ENCODE measurements at regions of chr12 and their contacts with region 1.

Region 1: GRCh38 chr12:52903285-52903854 is 1.5 kb downstream of the KRT8 start:
- DNase-seq: peak; percentile 90
- ATAC-seq: peak; percentile 56
- H3K4me3 Mint-ChIP-seq: peak overlapping the region; percentile 92
- H3K27ac Mint-ChIP-seq: 0 out of 2 replicates have a peak overlapping the region, but pooled peaks have one; percentile 32
- H3K4me1 Mint-ChIP-seq: peaks cover 43% of the 10 kb centered on the region
- H3K27me3 Mint-ChIP-seq: no peaks in the 10 kb centered on the region
- CTCF ChIP-seq: no peak

Region 2: GRCh38 chr12:52769354-52769753 is 134.0 kb before region 1 on chr12:
- CTCF ChIA-PET with region 1: no interaction called
- POLR2A ChIA-PET with region 1: no interaction called
- DNase-seq: no peak
- ATAC-seq: no peak
- H3K4me3 Mint-ChIP-seq: no peak overlapping the region
- H3K27ac Mint-ChIP-seq: no peak overlapping the region
- H3K4me1 Mint-ChIP-seq: no peaks in the 10 kb centered on the region
- H3K27me3 Mint-ChIP-seq: peaks cover 4% of the 10 kb centered on the region
- CTCF ChIP-seq: no peak

Region 3: DNA sequence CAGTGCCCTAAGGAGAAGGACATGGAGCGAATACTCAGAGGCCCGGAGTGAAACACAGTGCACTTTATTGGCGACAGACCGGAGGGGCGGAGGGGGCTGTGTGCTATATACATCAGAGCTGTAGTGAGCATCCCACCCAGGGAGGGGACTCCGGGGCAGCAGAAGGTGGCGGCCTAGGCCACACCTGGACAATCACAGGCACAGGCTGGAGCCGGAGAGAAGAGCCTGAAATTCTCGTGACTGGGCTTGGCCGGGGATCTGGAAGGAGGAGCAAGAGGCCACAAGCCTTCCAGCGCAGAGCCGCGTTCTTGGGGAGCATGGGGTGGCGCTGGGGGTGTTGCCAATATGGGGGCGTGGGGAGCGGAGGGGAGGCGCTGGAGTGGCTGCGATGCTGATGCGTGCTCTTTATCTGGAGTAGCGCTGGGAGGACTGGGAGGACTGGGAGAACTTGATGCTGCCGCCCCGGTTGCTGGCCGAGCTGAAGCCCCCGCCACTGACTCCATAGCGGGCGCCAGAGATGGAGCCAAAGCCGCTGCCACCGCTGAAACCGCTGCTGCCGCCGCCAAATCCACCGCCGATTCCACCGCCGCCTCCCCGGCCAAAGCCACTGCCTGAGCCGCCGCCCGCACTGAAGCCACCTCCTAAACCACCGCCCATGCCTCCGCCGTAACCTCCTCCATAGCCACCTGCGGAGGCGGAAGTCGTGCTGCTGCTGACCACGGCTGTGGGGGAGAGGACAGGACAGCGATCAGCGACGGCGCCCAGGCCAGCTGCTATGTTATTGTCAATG is 113.5 kb before region 1 on chr12:
- CTCF ChIA-PET with region 1: no interaction called
- POLR2A ChIA-PET with region 1: no interaction called
- DNase-seq: peak; percentile 56
- ATAC-seq: peak; percentile 75
- H3K4me3 Mint-ChIP-seq: peak overlapping the region; percentile 50
- H3K27ac Mint-ChIP-seq: no peak overlapping the region
- H3K4me1 Mint-ChIP-seq: peaks cover 7% of the 10 kb centered on the region
- H3K27me3 Mint-ChIP-seq: peaks cover 14% of the 10 kb centered on the region
- CTCF ChIP-seq: no peak

Region 4: DNA sequence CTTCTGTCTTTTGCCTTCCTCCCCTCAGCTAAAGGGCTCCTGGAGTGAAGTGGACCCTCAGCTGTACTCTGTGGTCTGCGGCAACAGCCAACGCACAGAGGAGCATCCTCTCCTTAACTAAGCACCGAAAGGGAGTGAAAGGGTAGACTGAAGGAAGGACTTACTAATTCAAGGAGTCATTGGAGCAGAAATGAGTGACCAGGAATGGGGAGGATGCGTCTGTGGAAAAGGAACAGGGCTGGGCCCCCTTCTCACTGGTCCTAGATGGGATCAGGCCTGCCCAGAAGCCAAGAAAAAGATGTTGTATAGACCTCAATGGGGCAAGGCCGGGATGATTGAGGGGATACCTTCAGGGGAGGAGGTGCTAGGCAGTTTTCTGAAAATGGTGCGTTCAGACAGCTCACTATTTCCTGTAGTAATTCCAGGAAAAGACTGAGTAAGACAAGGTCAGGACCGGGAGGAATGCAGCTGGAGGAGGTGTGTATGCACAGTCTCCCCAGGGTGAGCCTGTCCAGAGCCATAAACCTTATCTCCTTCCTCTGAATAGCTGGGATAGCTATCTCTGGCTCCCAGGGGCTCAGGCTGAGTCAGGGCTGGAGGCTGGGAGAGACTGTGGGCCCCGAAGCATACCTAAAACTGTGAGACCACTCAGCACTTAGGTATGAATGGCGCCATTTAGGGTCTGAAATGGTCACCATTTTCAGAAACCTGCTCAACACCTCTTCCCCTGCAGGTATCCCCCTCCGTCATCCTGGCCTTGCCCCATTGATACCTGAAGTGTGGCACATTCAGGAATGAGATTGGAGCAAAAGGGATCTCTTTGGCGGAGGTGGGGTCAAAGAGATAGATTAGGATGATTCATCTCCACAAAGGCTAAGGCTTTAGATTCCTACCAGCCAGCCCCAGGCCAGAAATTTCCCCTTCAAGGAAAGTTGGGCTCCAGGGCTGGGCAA is 21.7 kb after region 1 on chr12:
- CTCF ChIA-PET with region 1: interaction called, 31 read pairs
- POLR2A ChIA-PET with region 1: interaction called, 4 read pairs
- DNase-seq: no peak
- ATAC-seq: no peak
- H3K4me3 Mint-ChIP-seq: no peak overlapping the region
- H3K27ac Mint-ChIP-seq: no peak overlapping the region; the same call in 1 of the 2 replicates
- H3K4me1 Mint-ChIP-seq: peaks cover 55% of the 10 kb centered on the region
- H3K27me3 Mint-ChIP-seq: no peaks in the 10 kb centered on the region
- CTCF ChIP-seq: no peak

Region 5: GRCh38 chr12:52956987-52957386 is 53.6 kb after region 1 on chr12:
- CTCF ChIA-PET with region 1: interaction called, 13 read pairs
- POLR2A ChIA-PET with region 1: interaction called, 44 read pairs
- DNase-seq: no peak
- ATAC-seq: peak; percentile 36
- H3K4me3 Mint-ChIP-seq: no peak overlapping the region
- H3K27ac Mint-ChIP-seq: peak overlapping the region; percentile 55
- H3K4me1 Mint-ChIP-seq: peaks cover 15% of the 10 kb centered on the region
- H3K27me3 Mint-ChIP-seq: no peaks in the 10 kb centered on the region; the same call in 1 of the 2 replicates
- CTCF ChIP-seq: no peak

Region 6: DNA sequence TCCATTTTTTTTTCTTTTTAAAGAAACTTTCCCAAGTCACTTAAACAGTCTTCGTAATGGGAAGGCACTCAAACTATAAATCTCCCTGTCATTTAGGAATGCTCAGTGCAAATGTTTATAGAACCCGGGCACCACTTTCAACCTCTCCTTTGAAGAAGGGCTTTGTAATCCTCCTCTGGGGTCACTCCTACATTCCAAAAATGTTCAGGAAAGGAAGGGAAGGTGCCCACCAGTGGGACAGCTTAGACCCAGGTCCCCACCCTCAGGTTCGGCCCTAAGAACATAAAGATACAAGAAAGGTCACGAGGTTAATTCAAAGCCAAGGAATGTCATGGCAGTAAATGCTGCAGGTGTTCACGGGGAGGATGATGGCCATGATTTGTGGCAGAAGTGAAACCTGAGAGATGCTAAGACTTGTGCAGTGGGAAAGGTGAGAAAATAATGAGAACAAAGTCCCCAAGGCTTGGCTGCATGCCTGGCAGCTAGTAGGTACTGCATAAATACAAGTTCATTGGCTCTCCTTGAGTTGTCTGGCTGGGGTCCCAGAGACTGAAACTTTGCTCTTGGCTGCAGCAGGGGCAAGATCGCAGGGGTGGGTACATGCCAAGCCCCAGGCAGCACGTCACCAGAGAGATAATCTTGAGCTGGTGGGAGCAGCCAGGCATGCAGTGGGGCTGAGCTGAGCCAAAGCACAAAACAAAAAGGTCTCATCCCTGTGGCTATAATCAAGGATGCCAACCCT is 66.6 kb after region 1 on chr12:
- CTCF ChIA-PET with region 1: interaction called, 20 read pairs
- POLR2A ChIA-PET with region 1: interaction called, 14 read pairs
- DNase-seq: no peak
- ATAC-seq: no peak
- H3K4me3 Mint-ChIP-seq: no peak overlapping the region
- H3K27ac Mint-ChIP-seq: no peak overlapping the region; the same call in 1 of the 2 replicates
- H3K4me1 Mint-ChIP-seq: peaks cover 26% of the 10 kb centered on the region
- H3K27me3 Mint-ChIP-seq: peaks cover 42% of the 10 kb centered on the region
- CTCF ChIP-seq: no peak